HCT116 (cell line): ENCODE measurements at regions of chr9 and their contacts with region 1.

Region 1: DNA sequence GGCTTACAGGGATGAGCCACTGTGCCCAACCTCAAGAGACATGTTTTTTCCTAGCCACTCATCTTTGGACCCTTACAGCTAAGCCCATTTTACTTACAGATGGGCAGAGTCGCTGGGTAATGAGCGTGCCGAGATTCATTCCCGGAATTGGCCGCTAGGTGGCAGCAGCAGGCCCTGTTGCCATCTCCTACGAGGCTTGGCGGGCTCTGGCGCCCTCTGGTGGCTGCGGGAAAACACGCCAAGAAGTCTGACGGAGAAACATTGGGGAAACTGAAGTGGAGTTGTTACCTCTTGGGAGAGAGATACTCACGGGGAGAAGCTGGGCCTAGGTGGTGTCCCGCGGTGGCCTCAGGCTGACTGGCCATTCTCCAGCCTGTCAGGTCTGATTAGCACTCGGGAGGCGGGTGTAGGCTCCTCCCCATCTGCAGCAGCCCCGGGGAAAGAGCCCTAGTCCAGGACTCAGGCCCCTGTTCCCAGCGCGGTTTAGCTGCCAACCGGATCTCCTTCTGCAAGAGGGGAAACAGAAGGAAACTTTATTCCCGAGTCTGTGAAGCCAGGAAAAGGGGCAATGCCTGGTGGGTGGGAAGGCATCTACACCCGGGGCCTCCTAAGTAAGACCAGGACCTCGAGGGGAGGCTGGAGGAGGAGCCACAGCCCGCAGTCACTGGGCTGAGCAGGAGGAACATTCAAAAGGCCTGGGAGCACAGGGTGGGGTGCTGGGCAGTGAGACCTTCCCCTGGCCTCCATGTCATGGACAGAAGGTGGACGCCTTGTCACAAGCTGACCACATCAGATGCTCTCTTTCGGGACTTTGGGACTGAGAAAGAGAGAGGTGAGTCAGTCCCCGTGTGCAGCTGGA is 9.7 kb downstream of the PTGES2 start:
- DNase-seq: peak; percentile 74
- ATAC-seq: peak; percentile 85
- H3K4me3 ChIP-seq: no peak overlapping the region
- H3K27ac ChIP-seq: no peak overlapping the region
- H3K4me1 ChIP-seq: peaks cover 3 to 4% of the 10 kb centered on the region in 2 experiments; a peak in 3 of 4 replicates
- H3K27me3 ChIP-seq: no peaks in the 10 kb centered on the region
- CTCF ChIP-seq: peak in 2 of 3 experiments; percentile 100; a peak in 4 of 6 replicates
- POLR2A ChIP-seq: no peak
- RAD21 ChIP-seq: no peak

Region 2: GRCh38 chr9:128098297-128099230 is 19.3 kb before region 1 on chr9:
- CTCF ChIA-PET with region 1: interaction called, 11 read pairs
- POLR2A ChIA-PET with region 1: interaction called, 3 read pairs
- RAD21 ChIA-PET with region 1: interaction called in 1 of 2 experiments, 4 read pairs
- intact Hi-C with region 1: no loop called
- DNase-seq: peak; percentile 92
- ATAC-seq: peak; percentile 90
- H3K4me3 ChIP-seq: peak overlapping the region; percentile 49 to 68
- H3K27ac ChIP-seq: peak overlapping the region; percentile 57
- H3K4me1 ChIP-seq: peaks cover 29 to 53% of the 10 kb centered on the region in 2 experiments
- H3K27me3 ChIP-seq: no peaks in the 10 kb centered on the region
- CTCF ChIP-seq: no peak
- POLR2A ChIP-seq: no peak
- RAD21 ChIP-seq: no peak

Region 3: DNA sequence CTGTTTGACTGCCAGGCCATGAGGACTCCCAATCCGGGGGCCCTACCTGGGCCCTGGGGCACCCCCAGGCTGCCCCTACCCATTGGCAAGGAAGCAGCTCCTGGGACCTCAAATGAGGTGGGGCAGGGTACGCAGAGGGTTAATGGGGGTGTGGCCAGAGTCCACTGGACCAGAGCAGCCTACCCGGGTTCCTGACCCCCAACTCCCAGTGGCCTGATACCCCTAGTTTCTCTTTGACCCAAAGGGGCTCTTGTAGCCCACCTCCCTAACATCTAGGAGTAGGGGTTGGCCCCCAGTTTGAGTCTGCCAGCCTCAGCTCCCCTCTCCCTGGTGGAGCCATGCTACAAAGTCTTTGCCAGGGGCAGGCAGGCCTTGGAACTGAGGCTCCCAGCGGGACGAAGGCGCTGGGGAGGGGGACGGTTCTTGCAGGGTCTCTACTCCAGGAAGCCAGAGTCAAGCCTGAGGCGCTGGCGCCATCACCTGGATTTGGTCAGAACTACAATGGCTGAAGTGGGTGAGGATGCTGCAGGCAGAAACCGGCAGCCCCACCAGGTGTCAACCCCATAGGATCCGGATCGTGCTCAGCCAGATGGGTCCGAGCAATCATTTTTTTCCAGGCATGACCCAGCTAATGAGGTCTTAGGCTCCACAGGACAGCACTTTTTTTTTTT is 294.4 kb after region 1 on chr9:
- CTCF ChIA-PET with region 1: no interaction called
- POLR2A ChIA-PET with region 1: no interaction called
- RAD21 ChIA-PET with region 1: no interaction called
- intact Hi-C with region 1: no loop called
- DNase-seq: no peak
- ATAC-seq: peak; percentile 65
- H3K4me3 ChIP-seq: no peak overlapping the region
- H3K27ac ChIP-seq: no peak overlapping the region
- H3K4me1 ChIP-seq: peaks cover 4 to 14% of the 10 kb centered on the region in 2 experiments; a peak in 3 of 4 replicates
- H3K27me3 ChIP-seq: no peaks in the 10 kb centered on the region
- CTCF ChIP-seq: peak; percentile 67 to 81 (median 79)
- POLR2A ChIP-seq: no peak
- RAD21 ChIP-seq: peak; percentile 90

Region 4: GRCh38 chr9:128863647-128864046 is 745.8 kb after region 1 on chr9:
- CTCF ChIA-PET with region 1: no interaction called
- POLR2A ChIA-PET with region 1: no interaction called
- RAD21 ChIA-PET with region 1: no interaction called
- intact Hi-C with region 1: no loop called
- DNase-seq: peak; percentile 48
- ATAC-seq: peak; percentile 94
- H3K4me3 ChIP-seq: no peak overlapping the region
- H3K27ac ChIP-seq: peak overlapping the region; percentile 15; the same call in 1 of the 2 replicates
- H3K4me1 ChIP-seq: peaks cover 2 to 7% of the 10 kb centered on the region in 2 experiments; a peak in 3 of 4 replicates
- H3K27me3 ChIP-seq: no peaks in the 10 kb centered on the region
- CTCF ChIP-seq: peak; percentile 87 to 94 (median 94)
- POLR2A ChIP-seq: no peak
- RAD21 ChIP-seq: peak; percentile 88